Left ventricle myocardium inferior (tissue), 1 donor: ENCODE measurements at regions of chr3 and their contacts with region 1.

Region 1: GRCh38 chr3:133573054-133573628 is 345 bp upstream of the CDV3 start:
- DNase-seq: peak; percentile 100
- H3K4me3 ChIP-seq: peak overlapping the region; percentile 89
- H3K27ac ChIP-seq: peak overlapping the region; percentile 98
- H3K4me1 ChIP-seq: peaks cover 73% of the 10 kb centered on the region
- H3K27me3 ChIP-seq: no peaks in the 10 kb centered on the region
- CTCF ChIP-seq: no peak

Region 2: GRCh38 chr3:132722164-132723024 is 850.7 kb before region 1 on chr3 and contains the start of gene NPHP3:
- intact Hi-C with region 1: loop called (anchors 10 kb)
- DNase-seq: peak; percentile 98
- H3K4me3 ChIP-seq: peak within 1 kb of the TSS; percentile 95
- H3K27ac ChIP-seq: peak within 1 kb of the TSS; percentile 99
- H3K4me1 ChIP-seq: peaks cover 54% of the 10 kb centered on the region
- H3K27me3 ChIP-seq: no peaks in the 10 kb centered on the region
- CTCF ChIP-seq: peak; percentile 23
- total RNA-seq, gene NPHP3: 10.1 TPM

Region 3: DNA sequence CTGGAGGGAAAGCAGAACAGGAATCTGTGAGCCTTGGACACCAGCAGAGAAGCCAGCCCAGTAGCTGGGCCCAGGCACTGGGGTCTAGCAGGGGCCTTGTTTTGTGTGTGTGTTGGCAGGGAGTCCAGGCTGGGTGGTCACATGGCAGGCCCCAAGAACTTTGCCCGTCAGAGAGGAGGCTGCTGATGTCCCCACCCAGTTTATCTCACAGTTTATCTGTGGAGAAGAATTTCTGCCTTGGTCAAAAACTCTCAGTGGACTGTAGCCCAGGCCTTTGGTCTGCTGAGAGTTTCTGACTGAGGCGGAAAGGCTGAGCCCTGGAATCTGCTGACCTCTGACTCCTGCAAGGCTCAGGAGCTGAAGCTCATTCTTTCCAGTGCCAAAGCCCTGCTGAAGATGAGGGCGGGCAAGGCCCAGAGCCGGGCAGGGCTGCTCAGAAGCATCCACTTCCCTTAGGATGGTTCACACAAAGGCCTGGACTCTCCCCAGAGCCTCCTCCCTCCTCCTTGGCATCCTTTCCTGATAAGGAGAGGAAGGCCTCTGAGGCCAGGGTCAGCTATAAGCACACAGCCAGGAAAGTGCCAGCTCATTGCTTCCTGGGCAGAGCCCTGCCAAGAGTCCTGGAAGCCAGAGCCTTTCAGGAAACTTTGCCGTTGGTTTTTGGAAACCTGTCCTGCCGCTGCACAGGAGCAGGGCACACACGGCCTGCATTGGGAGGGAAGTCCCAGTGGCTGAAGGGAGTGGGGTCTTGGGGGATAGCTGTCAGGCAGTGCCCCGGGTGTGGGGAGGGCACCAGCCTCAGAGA is 493.7 kb after region 1 on chr3:
- intact Hi-C with region 1: no loop called
- DNase-seq: no peak
- H3K4me3 ChIP-seq: no peak overlapping the region
- H3K27ac ChIP-seq: peak overlapping the region; percentile 66
- H3K4me1 ChIP-seq: peaks cover 28% of the 10 kb centered on the region
- H3K27me3 ChIP-seq: no peaks in the 10 kb centered on the region
- CTCF ChIP-seq: no peak